CD4-positive, alpha-beta T cell (primary cell): ENCODE measurements at regions of chr14 and their contacts with region 1.

Region 1: GRCh38 chr14:32038876-32039275 is 38.2 kb upstream of the ARHGAP5 start:
- DNase-seq: no peak
- ATAC-seq: no peak
- H3K4me3 ChIP-seq: no peak overlapping the region
- H3K4me3 Mint-ChIP-seq: no peak overlapping the region
- H3K27ac ChIP-seq: no peak overlapping the region
- H3K27ac Mint-ChIP-seq: no peak overlapping the region
- H3K4me1 ChIP-seq: no peaks in the 10 kb centered on the region
- H3K4me1 Mint-ChIP-seq: no peaks in the 10 kb centered on the region
- H3K27me3 ChIP-seq: no peaks in the 10 kb centered on the region
- H3K27me3 Mint-ChIP-seq: peaks cover 21% of the 10 kb centered on the region
- CTCF ChIP-seq: no peak

Region 2: GRCh38 chr14:32054536-32054935 is 15.7 kb after region 1 on chr14:
- CTCF ChIA-PET with region 1: no interaction called
- POLR2A ChIA-PET with region 1: no interaction called
- intact Hi-C with region 1: loop called in 1 of 2 experiments (anchors 1 kb)
- DNase-seq: no peak
- ATAC-seq: no peak
- H3K4me3 ChIP-seq: no peak overlapping the region
- H3K4me3 Mint-ChIP-seq: no peak overlapping the region
- H3K27ac ChIP-seq: no peak overlapping the region
- H3K27ac Mint-ChIP-seq: no peak overlapping the region
- H3K4me1 ChIP-seq: no peaks in the 10 kb centered on the region
- H3K4me1 Mint-ChIP-seq: no peaks in the 10 kb centered on the region
- H3K27me3 ChIP-seq: no peaks in the 10 kb centered on the region
- H3K27me3 Mint-ChIP-seq: peaks cover 10% of the 10 kb centered on the region
- CTCF ChIP-seq: no peak